ENCODE measurements at regions of chr3 and their contacts with region 1.

Region 1: DNA sequence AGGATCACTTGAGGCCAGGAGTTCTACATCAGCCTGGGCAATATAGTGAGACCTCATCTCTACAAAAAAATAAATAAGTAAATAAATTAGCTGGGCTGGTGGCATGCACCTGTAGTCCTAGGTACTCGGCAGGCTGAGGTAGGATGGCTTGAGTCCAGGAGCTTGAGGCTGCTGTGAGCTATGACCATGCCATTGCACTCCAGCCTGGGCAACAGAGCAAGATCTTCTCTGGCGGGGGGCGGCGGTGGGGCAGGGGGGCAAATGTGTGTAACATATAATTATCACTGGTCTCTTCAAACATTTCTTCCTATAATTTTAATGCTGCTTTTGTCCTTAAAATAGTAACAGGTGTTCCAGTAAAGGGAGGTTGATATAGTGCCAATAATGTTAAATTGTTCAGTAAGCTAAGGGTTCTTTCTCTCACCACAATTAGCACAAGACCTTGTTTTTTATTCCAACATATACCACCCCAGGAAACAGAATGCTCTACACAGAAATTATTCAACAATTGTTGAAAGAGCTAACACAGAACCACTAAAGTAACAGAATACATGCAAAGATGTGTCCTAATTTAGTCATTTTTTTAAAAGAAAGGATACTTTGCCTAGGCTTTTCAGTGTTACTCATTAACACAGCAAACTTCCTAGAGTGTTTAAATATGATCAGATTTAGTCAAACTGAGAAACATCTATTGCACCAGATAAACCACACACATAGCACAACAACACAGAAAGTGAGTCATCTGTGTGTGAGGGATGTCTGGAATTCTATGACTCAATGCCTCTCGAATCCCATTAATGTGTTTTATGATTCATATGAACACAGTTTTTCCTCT is 29.1 kb downstream of the ANKRD28 start:
- DNase-seq: peak; percentile 94
- H3K4me3 ChIP-seq: peak overlapping the region in 1 of 3 experiments; percentile 20
- H3K27ac ChIP-seq: peak overlapping the region; percentile 79
- H3K4me1 ChIP-seq: peaks cover 24% of the 10 kb centered on the region
- H3K27me3 ChIP-seq: no peaks in the 10 kb centered on the region
- CTCF ChIP-seq: no peak

Region 2: GRCh38 chr3:15693355-15693754 is 75.3 kb before region 1 on chr3:
- CTCF ChIA-PET with region 1: no interaction called
- dilution Hi-C with region 1: no loop called
- in situ Hi-C with region 1: no loop called
- intact Hi-C with region 1: no loop called
- DNase-seq: no peak
- H3K4me3 ChIP-seq: no peak overlapping the region
- H3K27ac ChIP-seq: no peak overlapping the region
- H3K4me1 ChIP-seq: no peaks in the 10 kb centered on the region
- H3K27me3 ChIP-seq: no peaks in the 10 kb centered on the region
- CTCF ChIP-seq: no peak

Region 3: GRCh38 chr3:15781637-15782402 is 13.2 kb after region 1 on chr3:
- CTCF ChIA-PET with region 1: no interaction called
- dilution Hi-C with region 1: no loop called
- in situ Hi-C with region 1: no loop called
- intact Hi-C with region 1: loop called (anchors 1 kb)
- DNase-seq: no peak
- H3K4me3 ChIP-seq: no peak overlapping the region
- H3K27ac ChIP-seq: peak overlapping the region; percentile 38
- H3K4me1 ChIP-seq: peaks cover 52% of the 10 kb centered on the region
- H3K27me3 ChIP-seq: no peaks in the 10 kb centered on the region
- CTCF ChIP-seq: no peak

Measured in mammary epithelial cell (primary cell).